Caco-2 (cell line): ENCODE measurements at regions of chrX and their contacts with region 1.

Region 1: DNA sequence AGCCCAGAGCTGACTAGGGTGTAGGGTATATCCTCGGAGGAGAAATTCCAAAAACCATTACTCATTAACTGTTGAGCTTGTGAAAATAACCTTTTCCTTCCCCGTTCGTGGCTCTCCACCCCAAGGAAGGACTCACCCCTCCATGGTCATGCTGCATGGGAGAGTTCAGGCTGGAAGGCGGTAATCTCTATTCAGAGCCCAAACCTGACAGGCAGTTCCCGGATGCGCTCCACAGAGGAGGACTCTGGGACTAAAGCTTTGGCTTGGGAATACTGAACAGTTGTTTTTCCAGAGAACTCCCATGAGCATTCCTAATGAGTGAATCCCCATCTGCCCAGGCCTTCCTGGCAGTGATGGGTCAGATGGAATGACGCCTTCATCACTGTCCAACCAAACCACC is 125.4 kb downstream of the BCOR start:
- DNase-seq: no peak
- H3K4me3 ChIP-seq: no peak overlapping the region
- H3K4me3 Mint-ChIP-seq: no peak overlapping the region
- H3K27ac Mint-ChIP-seq: no peak overlapping the region
- H3K4me1 ChIP-seq: peaks cover 13% of the 10 kb centered on the region
- H3K4me1 Mint-ChIP-seq: no peaks in the 10 kb centered on the region
- H3K27me3 ChIP-seq: no peaks in the 10 kb centered on the region
- H3K27me3 Mint-ChIP-seq: no peaks in the 10 kb centered on the region
- CTCF ChIP-seq: no peak

Region 2: GRCh38 chrX:39814391-39814790 is 157.9 kb before region 1 on chrX:
- CTCF ChIA-PET with region 1: no interaction called
- POLR2A ChIA-PET with region 1: no interaction called
- intact Hi-C with region 1: loop called (anchors 10 kb)
- DNase-seq: no peak
- H3K4me3 ChIP-seq: no peak overlapping the region
- H3K4me3 Mint-ChIP-seq: no peak overlapping the region
- H3K27ac Mint-ChIP-seq: no peak overlapping the region
- H3K4me1 ChIP-seq: peaks cover 23% of the 10 kb centered on the region
- H3K4me1 Mint-ChIP-seq: no peaks in the 10 kb centered on the region
- H3K27me3 ChIP-seq: no peaks in the 10 kb centered on the region
- H3K27me3 Mint-ChIP-seq: no peaks in the 10 kb centered on the region
- CTCF ChIP-seq: no peak

Region 3: GRCh38 chrX:39984191-39984956 is 12.0 kb after region 1 on chrX:
- CTCF ChIA-PET with region 1: no interaction called
- POLR2A ChIA-PET with region 1: interaction called, 11 read pairs
- intact Hi-C with region 1: no loop called
- DNase-seq: peak; percentile 14 to 41
- H3K4me3 ChIP-seq: no peak overlapping the region
- H3K4me3 Mint-ChIP-seq: no peak overlapping the region
- H3K27ac Mint-ChIP-seq: no peak overlapping the region
- H3K4me1 ChIP-seq: peaks cover 7% of the 10 kb centered on the region; the same call in 1 of the 2 replicates
- H3K4me1 Mint-ChIP-seq: no peaks in the 10 kb centered on the region
- H3K27me3 ChIP-seq: no peaks in the 10 kb centered on the region
- H3K27me3 Mint-ChIP-seq: no peaks in the 10 kb centered on the region
- CTCF ChIP-seq: no peak

Region 4: DNA sequence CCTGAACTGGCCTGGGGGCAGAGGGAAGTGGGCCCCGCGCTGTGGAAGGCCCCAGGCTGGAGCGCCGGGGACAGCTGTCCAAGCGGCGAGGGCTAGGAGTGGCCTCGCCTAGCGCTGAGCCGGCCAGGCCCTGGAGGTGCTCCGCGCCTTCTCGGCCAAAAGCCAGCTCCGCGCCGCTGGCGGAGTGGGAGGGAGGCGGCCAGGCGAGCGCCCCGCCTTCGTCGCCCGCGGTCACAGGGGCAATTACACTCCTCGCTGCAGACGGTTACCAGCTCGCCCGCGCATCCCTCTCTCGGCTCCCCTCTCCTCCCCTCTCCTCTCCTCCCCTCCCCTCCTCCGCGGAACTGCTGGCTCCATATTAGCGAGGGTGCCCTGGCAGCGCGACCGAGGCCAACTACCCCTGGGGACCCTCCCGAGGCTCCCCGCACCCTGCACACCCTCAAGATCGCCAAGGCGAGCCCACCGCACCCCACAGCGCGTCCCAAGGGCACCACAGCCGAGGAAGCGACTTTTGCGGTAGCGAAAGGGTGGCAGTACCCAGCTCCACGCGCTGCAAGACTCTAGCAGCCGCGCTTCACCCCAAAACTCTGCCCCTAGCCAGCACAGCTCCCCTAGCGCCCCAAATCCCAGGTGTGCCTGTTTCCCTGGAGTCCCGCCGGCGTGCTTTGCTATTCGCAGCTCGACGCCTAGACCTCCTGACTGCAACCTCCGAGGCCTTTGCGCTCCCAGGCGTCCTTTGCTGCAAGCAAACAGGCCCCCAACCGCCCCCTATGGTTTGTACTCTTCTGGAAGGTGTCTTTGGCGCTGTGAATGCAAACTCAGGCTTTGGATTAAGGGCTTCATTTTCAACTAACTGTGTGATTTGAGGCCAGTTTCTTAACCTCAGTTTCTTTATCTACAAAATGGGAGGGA is 34.0 kb after region 1 on chrX:
- CTCF ChIA-PET with region 1: no interaction called
- POLR2A ChIA-PET with region 1: no interaction called
- intact Hi-C with region 1: no loop called
- DNase-seq: peak; percentile 72 to 74
- H3K4me3 ChIP-seq: peak overlapping the region; percentile 69
- H3K4me3 Mint-ChIP-seq: peak overlapping the region; percentile 82
- H3K27ac Mint-ChIP-seq: no peak overlapping the region
- H3K4me1 ChIP-seq: peaks cover 25% of the 10 kb centered on the region
- H3K4me1 Mint-ChIP-seq: peaks cover 14% of the 10 kb centered on the region
- H3K27me3 ChIP-seq: no peaks in the 10 kb centered on the region
- H3K27me3 Mint-ChIP-seq: no peaks in the 10 kb centered on the region
- CTCF ChIP-seq: peak in 1 of 2 experiments; percentile 23

Region 5: GRCh38 chrX:40201329-40201885 is 229.1 kb after region 1 on chrX:
- CTCF ChIA-PET with region 1: no interaction called
- POLR2A ChIA-PET with region 1: no interaction called
- intact Hi-C with region 1: no loop called
- DNase-seq: no peak
- H3K4me3 ChIP-seq: no peak overlapping the region
- H3K4me3 Mint-ChIP-seq: no peak overlapping the region
- H3K27ac Mint-ChIP-seq: no peak overlapping the region
- H3K4me1 ChIP-seq: no peaks in the 10 kb centered on the region
- H3K4me1 Mint-ChIP-seq: no peaks in the 10 kb centered on the region
- H3K27me3 ChIP-seq: no peaks in the 10 kb centered on the region
- H3K27me3 Mint-ChIP-seq: no peaks in the 10 kb centered on the region
- CTCF ChIP-seq: no peak